Naive thymus-derived CD8-positive, alpha-beta T cell (primary cell): ENCODE measurements at regions of chr3 and their contacts with region 1.

Region 1: DNA sequence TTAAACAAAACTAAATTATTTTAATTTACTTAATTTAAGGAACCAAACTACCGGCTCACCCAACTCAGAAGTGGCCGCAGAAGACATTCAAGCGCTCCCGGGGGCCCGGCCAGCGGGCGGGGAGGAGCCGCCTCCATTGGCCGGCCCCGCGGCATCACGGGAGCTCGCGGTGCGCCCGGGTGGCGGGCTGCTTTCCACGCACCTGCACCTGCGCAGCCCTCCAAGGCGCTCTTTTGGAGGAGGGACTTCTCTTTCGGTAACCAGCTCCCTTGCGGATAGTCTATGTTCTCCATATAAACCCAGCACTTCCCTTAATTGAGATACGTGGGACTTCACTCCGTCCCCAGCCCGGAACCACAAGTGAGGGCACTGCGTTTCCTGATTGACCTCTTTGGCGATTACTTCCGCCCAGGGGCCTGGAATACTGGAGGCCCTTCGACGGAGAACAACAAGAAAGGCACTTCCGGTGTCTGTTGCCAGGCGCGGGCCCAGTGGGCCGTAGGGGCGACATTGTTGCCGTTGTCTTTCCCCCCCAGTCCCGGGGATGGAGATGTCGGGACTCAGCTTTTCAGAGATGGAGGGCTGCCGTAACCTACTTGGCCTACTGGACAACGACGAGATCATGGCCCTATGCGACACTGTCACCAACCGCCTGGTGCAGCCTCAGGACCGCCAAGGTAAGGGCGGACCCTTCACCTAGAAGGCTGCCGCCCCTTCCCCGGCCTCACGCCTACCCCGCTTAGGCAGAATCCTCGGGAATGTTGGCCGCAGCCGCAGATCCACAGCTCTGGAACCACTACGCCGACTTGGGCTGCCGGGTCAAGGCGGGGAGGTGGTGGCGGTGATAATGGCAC is at the start of gene C3orf38:
- DNase-seq: peak; percentile 73 to 88 (median 80)
- ATAC-seq: peak; percentile 92 to 94
- H3K4me3 Mint-ChIP-seq: peak within 1 kb of the TSS; percentile 93 to 100 (median 98)
- H3K27ac Mint-ChIP-seq: peak within 1 kb of the TSS; percentile 97 to 100 (median 99)
- H3K4me1 Mint-ChIP-seq: peaks cover 22 to 49% (median 37%) of the 10 kb centered on the region in 4 donors
- H3K27me3 Mint-ChIP-seq: no peaks in the 10 kb centered on the region
- polyA plus RNA-seq, gene C3orf38: 16.9 to 19.4 (median 17.8) TPM

Region 2: DNA sequence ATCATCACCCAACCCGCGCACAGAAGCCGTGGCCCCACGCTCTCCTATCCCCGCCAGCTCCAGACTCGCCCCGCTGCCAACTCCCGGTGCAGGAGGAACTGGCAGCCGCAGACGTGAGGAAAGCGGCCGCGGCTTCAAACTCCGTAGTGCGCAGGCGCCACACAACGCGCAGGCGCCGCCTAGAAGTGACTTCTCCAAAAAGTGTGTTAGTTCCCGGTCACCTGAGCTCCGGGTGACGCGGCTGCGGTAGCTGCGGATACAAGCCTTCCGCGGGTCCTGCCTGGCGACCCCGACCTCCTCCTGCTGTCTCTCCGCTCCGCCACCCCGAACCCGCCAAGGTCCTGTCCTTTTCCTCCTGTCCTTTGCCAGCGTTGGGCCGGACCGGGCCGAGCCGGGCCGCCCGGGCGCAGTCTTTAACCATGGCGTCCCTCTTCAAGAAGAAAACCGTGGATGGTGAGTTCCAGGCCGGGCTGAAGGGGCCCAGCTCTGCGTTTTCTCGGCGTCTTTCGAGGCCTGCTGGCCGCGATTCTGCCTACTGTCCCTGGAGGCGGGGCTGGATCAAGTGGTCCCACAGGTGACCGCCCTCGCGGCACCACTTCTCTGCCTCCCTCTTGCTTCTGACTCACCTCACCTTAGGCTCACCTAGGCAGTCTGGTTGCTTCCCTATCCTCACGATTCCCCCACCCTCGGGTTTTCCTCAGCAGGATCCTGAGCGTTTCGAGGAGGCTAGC is 922.5 kb before region 1 on chr3 and contains the start of gene CHMP2B:
- POLR2A ChIA-PET with region 1: interaction called, 11 read pairs
- DNase-seq: peak; percentile 86 to 94 (median 90)
- ATAC-seq: peak; percentile 88 to 89
- H3K4me3 Mint-ChIP-seq: peak within 1 kb of the TSS; percentile 96 to 100 (median 99)
- H3K27ac Mint-ChIP-seq: peak within 1 kb of the TSS; percentile 96 to 100 (median 98)
- H3K4me1 Mint-ChIP-seq: peaks cover 22 to 45% (median 45%) of the 10 kb centered on the region in 4 donors
- H3K27me3 Mint-ChIP-seq: peaks cover 2 to 14% (median 6%) of the 10 kb centered on the region in 5 donors
- polyA plus RNA-seq, gene CHMP2B: 41.8 to 57.0 (median 48.6) TPM

Region 3: GRCh38 chr3:87924485-87924884 is 225.3 kb before region 1 on chr3:
- POLR2A ChIA-PET with region 1: no interaction called
- DNase-seq: no peak
- ATAC-seq: no peak
- H3K4me3 Mint-ChIP-seq: no peak overlapping the region
- H3K27ac Mint-ChIP-seq: no peak overlapping the region
- H3K4me1 Mint-ChIP-seq: no peaks in the 10 kb centered on the region
- H3K27me3 Mint-ChIP-seq: peaks cover 0 to 2% (median 0%) of the 10 kb centered on the region in 5 donors

Region 4: GRCh38 chr3:88031642-88032077 is 118.1 kb before region 1 on chr3:
- POLR2A ChIA-PET with region 1: interaction called, 15 read pairs
- DNase-seq: peak in 5 of 10 donors; percentile 2 to 55 (median 41)
- ATAC-seq: peak; percentile 82 to 92
- H3K4me3 Mint-ChIP-seq: peak overlapping the region; percentile 71 to 94 (median 86)
- H3K27ac Mint-ChIP-seq: peak overlapping the region; percentile 87 to 95 (median 91)
- H3K4me1 Mint-ChIP-seq: peaks cover 5 to 34% (median 31%) of the 10 kb centered on the region in 4 donors
- H3K27me3 Mint-ChIP-seq: no peaks in the 10 kb centered on the region

Region 5: DNA sequence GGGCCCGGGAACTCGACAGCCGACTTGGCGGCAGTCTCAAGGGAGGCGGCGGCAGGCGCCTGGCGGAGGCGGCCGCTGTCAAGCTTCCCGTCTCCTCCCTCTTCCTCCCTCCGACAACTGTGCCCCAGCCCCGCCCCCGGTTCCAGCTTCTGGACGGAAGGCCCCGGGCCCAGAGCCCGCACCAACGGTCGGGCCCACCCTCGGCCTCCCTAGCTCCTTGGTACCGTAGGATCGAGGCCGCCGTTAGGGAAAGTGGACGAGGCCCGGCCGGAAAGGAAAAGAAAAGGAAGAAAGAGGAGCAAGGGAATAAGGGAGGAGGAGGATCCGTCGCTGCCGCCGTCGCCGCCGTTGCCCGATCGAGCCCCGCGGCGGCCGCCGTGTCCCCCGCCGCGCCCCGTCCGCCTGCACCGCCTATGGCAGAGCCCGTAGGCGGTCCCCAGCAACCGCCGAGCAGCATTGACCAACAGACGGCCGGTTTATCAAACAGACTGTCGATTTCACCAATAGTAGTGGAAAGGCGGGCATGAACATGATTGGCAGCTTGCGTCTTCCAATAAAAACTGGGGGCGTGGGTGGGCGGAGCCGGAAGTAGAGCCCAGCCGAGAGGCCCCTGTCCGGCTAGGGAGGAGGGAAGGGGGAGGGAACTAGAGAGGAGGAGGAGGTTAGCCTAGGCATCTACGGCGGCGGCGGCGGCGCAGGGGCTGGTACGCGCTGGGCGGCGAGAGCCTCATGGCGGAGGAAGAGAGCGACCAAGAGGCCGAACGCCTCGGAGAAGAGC is 91.0 kb before region 1 on chr3 and contains the starts of genes CGGBP1 and ZNF654:
- POLR2A ChIA-PET with region 1: interaction called, 68 read pairs
- DNase-seq: peak; percentile 87 to 100 (median 99)
- ATAC-seq: peak; percentile 91 to 92
- H3K4me3 Mint-ChIP-seq: peak within 1 kb of the TSS; percentile 92 to 100 (median 98)
- H3K27ac Mint-ChIP-seq: peak within 1 kb of the TSS; percentile 94 to 99 (median 98)
- H3K4me1 Mint-ChIP-seq: peaks cover 27 to 73% (median 58%) of the 10 kb centered on the region in 4 donors
- H3K27me3 Mint-ChIP-seq: no peaks in the 10 kb centered on the region
- polyA plus RNA-seq, gene CGGBP1: 85.8 to 97.2 (median 92.1) TPM
- polyA plus RNA-seq, gene ZNF654: 11.1 to 13.9 (median 11.2) TPM